ENCODE measurements at regions of chr6 and their contacts with region 1.

Region 1: DNA sequence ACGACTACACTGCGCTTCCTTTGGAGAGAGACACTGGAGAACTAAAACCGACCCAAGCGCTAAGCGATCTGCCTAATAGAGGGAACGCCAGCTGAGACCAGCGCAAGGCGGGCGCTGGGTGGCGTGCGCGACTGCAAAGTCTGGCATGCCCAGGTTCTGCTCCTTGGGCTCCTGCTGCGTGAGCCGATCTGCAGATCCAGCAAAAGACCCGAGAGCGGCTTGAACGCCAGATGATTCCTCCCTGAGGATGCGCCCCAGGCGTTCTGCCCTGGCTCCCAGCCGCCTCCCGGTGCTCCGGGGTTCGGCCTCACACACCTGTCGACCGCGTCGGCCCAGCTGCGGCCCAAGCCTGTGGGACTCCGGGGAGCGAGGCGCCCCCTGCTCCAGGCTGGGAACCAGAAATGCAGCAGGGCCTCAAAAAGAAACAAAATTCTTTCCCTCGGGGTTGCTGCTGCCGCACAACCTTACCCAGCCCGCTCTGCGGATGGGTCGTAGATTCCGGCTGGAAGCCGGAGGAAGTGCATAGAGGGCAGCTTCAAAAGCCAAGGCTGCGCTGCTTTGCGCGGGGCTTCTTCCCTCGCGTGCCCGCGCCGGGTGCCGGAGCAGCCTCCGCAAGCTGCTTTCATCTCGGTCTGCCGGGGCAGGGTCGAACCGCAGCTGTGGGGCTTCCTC is 17.9 kb upstream of the PRDM13 start:
- DNase-seq: peak; percentile 76
- ATAC-seq: peak; percentile 94
- H3K4me3 Mint-ChIP-seq: peak overlapping the region; percentile 78
- H3K27ac Mint-ChIP-seq: peak overlapping the region; percentile 36
- H3K4me1 Mint-ChIP-seq: peaks cover 26% of the 10 kb centered on the region
- H3K27me3 Mint-ChIP-seq: peaks cover 77% of the 10 kb centered on the region

Region 2: GRCh38 chr6:99568103-99568933 is 20.4 kb before region 1 on chr6 and contains the start of gene CCNC:
- CTCF ChIA-PET with region 1: interaction called, 14 read pairs
- DNase-seq: peak; percentile 94
- ATAC-seq: peak; percentile 98
- H3K4me3 Mint-ChIP-seq: peak within 1 kb of the TSS; percentile 98
- H3K27ac Mint-ChIP-seq: peak within 1 kb of the TSS; percentile 86
- H3K4me1 Mint-ChIP-seq: peaks cover 28% of the 10 kb centered on the region
- H3K27me3 Mint-ChIP-seq: no peaks in the 10 kb centered on the region
- total RNA-seq, gene CCNC: 39.3 to 39.4 TPM

Region 3: DNA sequence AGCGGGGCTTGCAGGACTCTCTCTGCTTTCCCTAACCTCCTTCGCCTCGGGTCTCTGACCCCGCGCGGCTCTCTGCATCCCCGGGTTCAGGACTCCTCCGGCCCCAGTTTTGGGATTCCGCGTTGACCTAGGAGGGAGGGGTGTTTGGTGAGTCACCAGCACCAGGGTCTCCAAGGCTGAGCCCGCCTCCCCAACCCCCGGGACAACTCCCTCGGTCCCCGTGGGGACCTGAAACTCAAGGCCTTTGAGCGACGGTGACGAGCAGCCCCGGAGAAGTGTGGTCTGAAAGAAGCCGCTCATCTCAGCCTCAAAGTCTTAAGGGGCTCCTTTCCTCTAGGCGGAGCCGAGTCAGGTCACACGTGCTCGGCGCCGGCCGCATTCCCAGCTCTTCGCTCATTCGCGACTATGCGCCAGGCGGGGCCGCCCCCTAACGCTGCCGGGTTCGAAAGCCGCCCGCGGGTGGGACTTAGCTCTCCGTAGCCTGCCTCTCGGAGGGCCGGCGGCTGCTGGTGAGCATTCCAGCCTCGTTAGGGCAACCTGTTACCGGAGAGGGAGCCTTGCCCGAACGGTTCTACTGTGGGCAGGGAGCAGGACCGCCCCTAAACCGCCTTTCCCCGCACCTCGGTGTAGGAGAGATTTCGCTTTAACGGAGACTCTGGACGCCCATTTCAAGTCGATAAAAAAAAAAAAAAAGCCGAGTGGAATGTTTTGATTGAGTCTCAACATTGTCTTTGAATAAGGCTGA is 14.8 kb after region 1 on chr6:
- CTCF ChIA-PET with region 1: interaction called, 28 read pairs
- DNase-seq: no peak
- ATAC-seq: peak; percentile 52
- H3K4me3 Mint-ChIP-seq: peak overlapping the region; percentile 57
- H3K27ac Mint-ChIP-seq: no peak overlapping the region
- H3K4me1 Mint-ChIP-seq: peaks cover 31% of the 10 kb centered on the region
- H3K27me3 Mint-ChIP-seq: peaks cover 95% of the 10 kb centered on the region

Region 4: DNA sequence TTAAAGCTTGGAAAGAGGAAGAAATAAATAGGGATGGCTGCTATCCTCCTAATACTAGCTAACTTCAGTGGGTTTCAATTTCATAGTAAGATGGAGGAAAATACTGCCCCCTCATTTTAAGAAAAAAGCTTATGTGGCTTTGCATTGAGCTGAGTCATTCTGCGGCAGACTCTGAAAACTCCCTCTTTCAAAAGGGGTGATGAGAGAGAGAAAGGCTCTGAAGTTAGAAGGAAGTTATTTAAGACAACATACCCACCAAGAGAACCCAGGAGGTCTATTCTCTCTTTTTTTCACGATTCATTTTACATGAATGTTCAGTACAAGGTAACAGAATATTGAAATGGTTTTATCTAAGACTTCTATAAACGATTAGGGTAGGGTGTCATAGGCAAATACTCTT is 22.4 kb after region 1 on chr6:
- CTCF ChIA-PET with region 1: interaction called, 28 read pairs
- DNase-seq: peak; percentile 62
- ATAC-seq: peak; percentile 38
- H3K4me3 Mint-ChIP-seq: no peak overlapping the region
- H3K27ac Mint-ChIP-seq: no peak overlapping the region
- H3K4me1 Mint-ChIP-seq: peaks cover 43% of the 10 kb centered on the region
- H3K27me3 Mint-ChIP-seq: peaks cover 76% of the 10 kb centered on the region

Region 5: DNA sequence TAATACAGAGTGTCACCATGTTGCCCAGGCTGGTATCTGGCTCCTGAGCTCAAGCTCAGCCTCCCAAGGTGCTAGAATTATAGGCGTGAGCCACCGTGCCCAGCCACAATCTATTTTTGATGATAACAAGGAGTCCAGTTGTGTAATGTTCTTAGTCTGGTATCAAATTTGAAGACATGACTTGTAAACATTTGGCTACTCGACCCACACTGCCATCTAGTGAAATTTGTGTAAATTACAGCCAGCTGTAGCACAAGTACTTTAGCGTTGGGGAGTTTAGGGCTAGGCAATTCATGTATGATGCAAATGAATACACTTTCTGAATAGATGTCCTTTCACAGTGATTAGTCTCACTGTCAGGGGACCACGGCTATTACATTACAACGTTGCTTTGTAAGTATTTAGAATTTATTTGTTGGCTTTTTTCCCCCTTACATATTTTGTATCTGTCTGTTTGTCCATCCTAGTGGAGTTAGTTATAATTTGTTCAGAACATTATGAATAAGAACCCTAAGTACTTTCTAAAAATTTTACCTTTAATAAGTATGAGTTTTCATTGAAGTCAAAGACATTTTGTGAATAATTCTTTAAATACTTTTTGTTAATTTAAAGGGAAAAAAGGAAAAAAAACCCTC is 157.6 kb after region 1 on chr6:
- CTCF ChIA-PET with region 1: interaction called, 44 read pairs
- DNase-seq: peak; percentile 68
- ATAC-seq: peak; percentile 61
- H3K4me3 Mint-ChIP-seq: no peak overlapping the region
- H3K27ac Mint-ChIP-seq: no peak overlapping the region
- H3K4me1 Mint-ChIP-seq: no peaks in the 10 kb centered on the region
- H3K27me3 Mint-ChIP-seq: peaks cover 46% of the 10 kb centered on the region

Measured in activated CD8-positive, alpha-beta memory T cell treated with anti-CD3 and anti-CD28 coated beads, Interleukin-2, amount 10 ng/mL, durations not matched to agents 7 days and 5 days (primary cell).